ENCODE measurements at regions of chr2 and their contacts with region 1.

Region 1: DNA sequence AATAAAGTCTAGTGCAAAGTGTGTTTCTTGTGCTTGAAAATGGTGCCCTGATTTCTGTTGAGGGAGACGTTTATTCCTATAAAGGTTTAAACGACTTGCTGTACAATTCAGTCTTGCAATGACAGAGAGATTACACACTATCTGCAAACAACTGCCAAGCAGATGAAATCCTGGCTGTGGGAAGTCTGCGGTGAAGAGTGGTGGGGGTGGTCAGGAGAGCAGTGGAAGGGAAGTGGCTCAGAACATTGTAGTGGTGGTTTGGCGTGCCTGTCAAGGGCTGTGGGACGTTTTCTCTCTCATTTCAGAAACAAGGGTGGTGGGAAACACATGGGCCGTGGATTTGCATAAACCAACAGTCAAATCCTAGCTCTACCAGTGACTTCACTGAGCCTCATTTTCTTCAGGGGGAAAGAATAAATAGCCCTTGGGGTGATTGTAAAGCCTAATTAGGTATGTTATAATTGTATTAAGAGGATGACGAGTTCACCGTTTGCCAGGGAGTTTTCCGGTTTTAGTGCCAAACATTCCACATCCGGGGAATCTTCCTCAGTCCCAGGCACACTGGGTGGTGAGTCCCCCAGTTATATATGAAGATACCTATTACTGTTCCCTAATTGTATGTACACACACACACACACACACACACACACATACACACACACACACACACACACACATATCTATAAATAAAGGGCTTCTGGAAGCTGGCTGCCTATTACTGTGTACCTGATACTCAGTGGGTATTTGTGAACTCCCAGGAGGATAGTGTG is 115.0 kb downstream of the SPTBN1 start:
- DNase-seq: peak; percentile 71 to 88
- ATAC-seq: peak; percentile 69 to 75
- H3K4me3 ChIP-seq: peak overlapping the region; percentile 20; the same call in 2 of the 3 replicates
- H3K27ac ChIP-seq: peak overlapping the region; percentile 93 to 97
- H3K4me1 ChIP-seq: peaks cover 93% of the 10 kb centered on the region
- CTCF ChIP-seq: no peak
- EP300 ChIP-seq: peak in 1 of 2 experiments; percentile 36; a peak in 2 of 5 replicates
- POLR2A ChIP-seq: no peak
- RAD21 ChIP-seq: peak; percentile 6 to 37; a peak in 1 of 5 replicates

Region 2: DNA sequence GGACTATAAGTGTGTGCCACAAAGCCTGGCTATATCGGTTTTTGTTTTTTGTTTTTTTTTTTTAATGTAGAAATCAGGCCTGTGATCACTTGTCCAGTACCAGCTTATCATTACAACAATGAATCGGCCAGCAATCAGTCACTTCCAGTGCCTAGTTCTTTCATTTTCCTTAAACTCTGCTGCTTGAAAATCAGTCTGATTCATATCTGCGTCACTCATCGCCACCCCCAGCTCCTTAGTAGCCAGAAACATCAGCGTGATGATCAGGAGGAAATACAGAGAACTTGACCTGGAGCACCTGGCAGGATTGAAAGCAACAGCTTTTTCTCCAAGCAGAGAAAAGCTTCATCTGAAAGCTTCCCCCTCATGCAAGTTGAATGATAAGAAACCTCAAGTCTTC is 39.6 kb before region 1 on chr2:
- CTCF ChIA-PET with region 1: interaction called, 91 read pairs
- POLR2A ChIA-PET with region 1: interaction called, 14 read pairs
- DNase-seq: peak; percentile 70 to 84
- ATAC-seq: peak; percentile 62 to 70
- H3K4me3 ChIP-seq: peak overlapping the region; percentile 8; the same call in 2 of the 3 replicates
- H3K27ac ChIP-seq: peak overlapping the region; percentile 89 to 98
- H3K4me1 ChIP-seq: peaks cover 65% of the 10 kb centered on the region
- CTCF ChIP-seq: no peak
- EP300 ChIP-seq: no peak; a peak in 1 of 5 replicates
- POLR2A ChIP-seq: no peak
- RAD21 ChIP-seq: peak; percentile 12 to 27; a peak in 2 of 5 replicates

Measured in A549 (cell line).